HCT116 (cell line): ENCODE measurements at regions of chr15 and their contacts with region 1.

Region 1: DNA sequence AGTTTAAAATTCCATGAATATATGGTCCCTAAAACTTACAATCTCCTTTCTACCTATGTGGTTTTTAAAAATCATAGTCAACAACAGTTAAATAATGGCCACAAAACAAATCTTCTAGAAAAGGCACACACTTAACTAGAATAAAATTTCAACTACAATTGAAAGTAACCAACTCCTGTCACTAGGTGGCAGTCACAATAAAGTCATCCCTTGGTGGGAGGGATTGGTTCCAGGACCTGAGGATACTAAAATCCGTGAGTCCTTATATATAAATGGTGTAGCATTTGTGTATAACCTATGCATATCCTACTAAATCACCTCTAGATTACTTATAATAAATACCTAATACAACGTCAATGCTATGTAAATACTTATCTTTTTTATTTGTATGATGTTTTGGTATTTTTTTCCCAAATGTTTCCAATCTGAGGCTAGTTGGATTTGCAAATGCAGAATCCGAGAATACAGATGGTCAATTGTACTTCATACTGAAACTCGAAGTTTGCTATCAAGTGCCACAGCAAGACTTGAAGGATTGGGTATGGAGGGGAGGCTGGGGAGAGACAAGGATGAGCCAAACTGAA is 172.6 kb downstream of the FMN1 start:
- DNase-seq: peak; percentile 47
- ATAC-seq: peak; percentile 81
- H3K4me3 ChIP-seq: no peak overlapping the region
- H3K27ac ChIP-seq: no peak overlapping the region
- H3K4me1 ChIP-seq: peaks cover 10 to 13% of the 10 kb centered on the region in 2 experiments; a peak in 3 of 4 replicates
- H3K27me3 ChIP-seq: no peaks in the 10 kb centered on the region
- CTCF ChIP-seq: peak; percentile 39 to 77 (median 62); a peak in 5 of 6 replicates
- POLR2A ChIP-seq: no peak
- RAD21 ChIP-seq: peak; percentile 69

Region 2: DNA sequence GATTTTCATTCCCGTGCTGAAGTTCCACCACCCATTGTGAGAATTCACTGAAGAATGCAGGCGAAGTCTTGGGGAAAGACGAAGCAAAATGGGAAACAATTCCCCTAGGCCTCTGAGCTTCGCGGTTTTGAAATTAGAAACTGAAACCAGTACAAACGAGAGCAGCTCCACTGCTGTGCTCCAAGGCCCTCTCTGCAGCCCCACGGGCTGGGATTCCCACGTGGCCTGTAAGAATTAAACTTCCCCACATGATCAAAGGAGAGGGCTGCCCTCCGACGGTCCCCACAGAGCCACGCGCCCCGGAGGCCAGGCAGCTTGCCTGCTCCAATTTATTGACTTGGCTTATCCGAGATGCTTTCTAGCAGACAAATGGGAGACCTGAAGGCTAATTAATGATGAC is 160.1 kb before region 1 on chr15:
- CTCF ChIA-PET with region 1: no interaction called
- POLR2A ChIA-PET with region 1: no interaction called
- RAD21 ChIA-PET with region 1: no interaction called
- intact Hi-C with region 1: no loop called
- DNase-seq: no peak
- ATAC-seq: no peak
- H3K4me3 ChIP-seq: no peak overlapping the region
- H3K27ac ChIP-seq: no peak overlapping the region
- H3K4me1 ChIP-seq: peaks cover 3 to 6% of the 10 kb centered on the region in 2 experiments; a peak in 3 of 4 replicates
- H3K27me3 ChIP-seq: no peaks in the 10 kb centered on the region
- CTCF ChIP-seq: no peak
- POLR2A ChIP-seq: no peak
- RAD21 ChIP-seq: no peak

Region 3: DNA sequence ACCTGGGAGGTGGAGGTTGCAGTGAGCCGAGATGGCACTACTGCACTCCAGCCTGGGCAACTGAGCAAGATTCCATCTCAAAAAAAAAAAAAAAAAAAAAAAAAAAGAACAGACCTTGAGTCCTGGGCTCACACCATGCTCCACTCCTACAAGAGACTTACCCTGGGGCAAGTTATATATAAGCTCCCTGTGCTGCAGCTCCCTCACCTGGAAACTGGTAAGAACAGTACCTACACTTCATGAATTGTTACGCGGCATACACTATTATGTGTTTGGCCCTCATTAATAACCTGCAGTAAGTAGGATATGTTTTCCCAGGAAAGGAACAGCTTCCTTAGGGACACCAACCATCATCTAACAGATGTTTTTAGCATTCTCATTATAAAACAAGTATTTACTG is 53.0 kb after region 1 on chr15:
- CTCF ChIA-PET with region 1: interaction called, 8 read pairs
- POLR2A ChIA-PET with region 1: no interaction called
- RAD21 ChIA-PET with region 1: no interaction called
- intact Hi-C with region 1: loop called (anchors 5 kb)
- DNase-seq: no peak
- ATAC-seq: peak; percentile 61; the same call in 1 of the 2 replicates
- H3K4me3 ChIP-seq: no peak overlapping the region
- H3K27ac ChIP-seq: no peak overlapping the region
- H3K4me1 ChIP-seq: no peaks in the 10 kb centered on the region
- H3K27me3 ChIP-seq: no peaks in the 10 kb centered on the region
- CTCF ChIP-seq: peak in 2 of 3 experiments; percentile 6 to 18; a peak in 2 of 6 replicates
- POLR2A ChIP-seq: no peak
- RAD21 ChIP-seq: peak; percentile 45